ENCODE measurements at regions of chrX and their contacts with region 1.

Region 1: DNA sequence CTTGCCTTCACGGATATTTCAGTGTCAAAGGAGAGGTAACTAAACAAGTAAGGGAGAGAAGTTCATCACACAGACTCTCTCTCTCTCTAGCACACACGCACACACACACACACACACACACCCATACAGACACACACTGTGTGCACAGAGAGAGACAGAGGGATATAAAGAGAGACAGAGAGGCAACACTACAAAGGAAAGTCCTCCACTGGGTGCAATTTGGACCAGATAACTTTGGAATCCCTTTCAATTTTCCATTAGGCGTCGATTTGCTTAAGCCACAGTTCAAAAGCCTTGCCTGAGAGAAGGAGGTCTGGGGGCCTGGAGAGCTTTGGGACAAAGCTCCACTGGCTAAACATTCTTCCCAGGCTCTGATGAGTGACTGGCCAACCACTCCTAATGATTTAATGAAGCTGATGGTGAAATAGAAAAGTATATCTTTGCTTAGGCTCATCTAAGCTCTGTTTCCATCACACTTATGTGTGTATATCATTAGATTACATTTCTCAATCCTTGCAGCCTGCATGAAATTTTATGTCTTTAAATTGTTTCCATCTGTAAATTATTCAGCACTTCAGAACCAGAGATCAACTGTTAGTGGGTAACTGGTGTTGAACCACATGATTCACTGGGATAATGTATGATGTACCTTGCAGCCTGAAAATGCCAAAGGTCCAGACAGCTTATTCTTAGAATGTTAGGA is 180.8 kb downstream of the MAGEB17 start:
- DNase-seq: no peak
- ATAC-seq: no peak
- H3K4me3 ChIP-seq: no peak overlapping the region
- H3K4me3 Mint-ChIP-seq: no peak overlapping the region
- H3K27ac ChIP-seq: no peak overlapping the region
- H3K27ac Mint-ChIP-seq: no peak overlapping the region
- H3K4me1 ChIP-seq: no peaks in the 10 kb centered on the region
- H3K4me1 Mint-ChIP-seq: no peaks in the 10 kb centered on the region
- H3K27me3 ChIP-seq: no peaks in the 10 kb centered on the region
- H3K27me3 Mint-ChIP-seq: peaks cover 5% of the 10 kb centered on the region
- CTCF ChIP-seq: no peak

Region 2: DNA sequence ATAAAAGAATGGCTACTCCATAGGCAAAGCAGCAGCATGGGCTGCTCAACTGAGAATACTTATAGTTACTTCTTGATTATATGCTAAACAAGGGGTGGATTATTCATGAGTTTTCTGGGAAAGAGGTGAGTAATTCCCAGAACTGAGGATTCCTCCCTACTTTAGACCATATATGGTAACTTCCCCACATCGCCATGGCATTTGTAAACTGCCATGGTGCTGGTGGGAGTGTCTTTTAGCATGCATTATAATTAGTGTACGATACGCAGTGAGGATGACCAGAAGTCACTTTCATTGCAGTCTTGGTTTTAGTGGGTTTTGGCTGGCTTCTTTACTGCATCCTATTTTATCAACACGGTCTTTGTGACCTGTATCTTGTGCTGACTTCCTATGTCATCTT is 39.3 kb before region 1 on chrX:
- CTCF ChIA-PET with region 1: no interaction called
- POLR2A ChIA-PET with region 1: no interaction called
- intact Hi-C with region 1: loop called in 1 of 2 experiments (anchors 1 kb)
- DNase-seq: no peak
- ATAC-seq: no peak
- H3K4me3 ChIP-seq: no peak overlapping the region
- H3K4me3 Mint-ChIP-seq: no peak overlapping the region
- H3K27ac ChIP-seq: no peak overlapping the region
- H3K27ac Mint-ChIP-seq: no peak overlapping the region
- H3K4me1 ChIP-seq: no peaks in the 10 kb centered on the region
- H3K4me1 Mint-ChIP-seq: no peaks in the 10 kb centered on the region
- H3K27me3 ChIP-seq: no peaks in the 10 kb centered on the region
- H3K27me3 Mint-ChIP-seq: peaks cover 26% of the 10 kb centered on the region
- CTCF ChIP-seq: no peak

Region 3: DNA sequence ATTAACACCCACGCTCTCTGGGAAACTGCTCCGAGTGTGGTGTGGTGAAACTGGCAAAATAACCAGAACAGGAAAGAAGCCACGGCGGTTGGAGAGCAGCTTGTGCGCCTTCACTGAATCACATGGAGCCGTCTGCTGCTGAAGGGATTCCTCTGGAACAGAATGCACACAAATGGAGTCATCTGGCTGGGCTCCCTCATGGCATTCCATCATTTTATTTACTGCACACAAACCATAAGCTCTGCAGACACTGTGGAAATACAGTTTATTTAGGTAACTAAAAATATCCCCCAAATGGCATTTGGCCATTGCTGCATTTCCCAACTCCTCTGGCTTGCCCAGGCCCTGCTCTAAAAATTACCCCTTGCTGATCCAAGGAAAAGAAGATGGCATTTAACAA is 114.8 kb after region 1 on chrX:
- CTCF ChIA-PET with region 1: no interaction called
- POLR2A ChIA-PET with region 1: no interaction called
- intact Hi-C with region 1: no loop called
- DNase-seq: no peak
- ATAC-seq: no peak
- H3K4me3 ChIP-seq: no peak overlapping the region
- H3K4me3 Mint-ChIP-seq: no peak overlapping the region
- H3K27ac ChIP-seq: no peak overlapping the region
- H3K27ac Mint-ChIP-seq: no peak overlapping the region
- H3K4me1 ChIP-seq: no peaks in the 10 kb centered on the region
- H3K4me1 Mint-ChIP-seq: no peaks in the 10 kb centered on the region
- H3K27me3 ChIP-seq: no peaks in the 10 kb centered on the region
- H3K27me3 Mint-ChIP-seq: no peaks in the 10 kb centered on the region
- CTCF ChIP-seq: no peak